ENCODE measurements at regions of chr1 and their contacts with region 1.

Region 1: GRCh38 chr1:151399890-151400495 is 620 bp downstream of the PSMB4 start:
- DNase-seq: peak in 4 of 14 experiments; percentile 15 to 49 (median 39)
- ATAC-seq: peak; percentile 1
- H3K4me3 ChIP-seq: peak overlapping the region; percentile 99
- H3K4me3 Mint-ChIP-seq: peak overlapping the region; percentile 93
- H3K27ac ChIP-seq: peak overlapping the region; percentile 91 to 97
- H3K27ac Mint-ChIP-seq: peak overlapping the region; percentile 93
- H3K4me1 ChIP-seq: peaks cover 29% of the 10 kb centered on the region
- H3K4me1 Mint-ChIP-seq: peaks cover 27% of the 10 kb centered on the region
- H3K27me3 ChIP-seq: no peaks in the 10 kb centered on the region
- H3K27me3 Mint-ChIP-seq: no peaks in the 10 kb centered on the region
- CTCF ChIP-seq: no peak

Region 2: GRCh38 chr1:151165738-151166505 is 234.1 kb before region 1 on chr1 and contains the starts of genes LYSMD1 and SCNM1:
- CTCF ChIA-PET with region 1: no interaction called
- POLR2A ChIA-PET with region 1: interaction called, 3 read pairs
- intact Hi-C with region 1: loop called in 1 of 2 experiments (anchors 2 kb)
- DNase-seq: peak; percentile 91 to 99 (median 94)
- ATAC-seq: peak; percentile 97
- H3K4me3 ChIP-seq: peak within 1 kb of the TSS; percentile 76
- H3K4me3 Mint-ChIP-seq: peak within 1 kb of the TSS; percentile 93
- H3K27ac ChIP-seq: peak within 1 kb of the TSS; percentile 36 to 42
- H3K27ac Mint-ChIP-seq: peak within 1 kb of the TSS; percentile 89
- H3K4me1 ChIP-seq: peaks cover 33% of the 10 kb centered on the region
- H3K4me1 Mint-ChIP-seq: peaks cover 52% of the 10 kb centered on the region
- H3K27me3 ChIP-seq: no peaks in the 10 kb centered on the region
- H3K27me3 Mint-ChIP-seq: no peaks in the 10 kb centered on the region
- CTCF ChIP-seq: no peak
- total RNA-seq, gene LYSMD1: 0.55 to 0.67 TPM
- total RNA-seq, gene SCNM1: 35.2 to 35.7 TPM

Region 3: DNA sequence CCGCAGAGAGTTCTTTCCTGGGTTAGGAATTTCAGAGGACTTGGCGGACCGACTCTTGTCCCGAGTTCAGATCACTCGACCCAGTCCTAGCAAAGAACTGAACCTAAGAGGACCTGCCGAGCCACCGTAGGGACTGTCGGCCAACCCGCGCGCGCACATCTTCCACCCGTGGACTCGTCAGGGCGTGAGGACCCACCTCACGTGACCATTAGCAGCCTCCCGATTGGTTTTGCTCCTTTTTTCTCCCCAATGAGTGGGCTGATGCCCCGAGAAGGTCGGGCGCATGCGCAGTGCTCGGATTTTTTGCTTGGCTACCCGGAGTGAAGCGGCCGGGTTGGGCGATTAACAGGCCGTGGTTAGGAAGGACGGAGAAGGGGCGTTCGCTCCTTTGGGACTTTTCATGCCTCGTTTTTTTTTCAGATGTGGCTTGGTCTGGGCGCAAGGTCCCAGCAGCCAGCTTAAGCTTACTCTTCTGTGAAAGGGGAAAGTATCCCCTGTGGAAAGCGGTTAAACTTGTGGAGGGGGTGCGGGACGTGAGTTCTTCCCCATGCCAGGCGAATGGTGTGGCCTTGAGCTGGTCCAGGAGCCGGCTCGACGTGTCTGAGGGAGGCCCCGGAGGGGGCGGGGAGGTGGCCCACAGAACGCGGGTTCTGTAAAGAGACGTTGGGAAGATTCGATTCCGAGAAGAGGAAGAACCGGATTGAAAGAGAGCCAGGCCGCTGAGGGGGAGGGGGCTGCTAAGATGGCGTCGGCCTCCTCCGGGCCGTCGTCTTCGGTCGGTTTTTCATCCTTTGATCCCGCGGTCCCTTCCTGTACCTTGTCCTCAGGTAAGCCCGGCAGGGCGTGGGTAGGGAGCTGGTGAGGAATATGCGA is 201.5 kb before region 1 on chr1 and contains the start of gene PIP5K1A:
- CTCF ChIA-PET with region 1: no interaction called
- POLR2A ChIA-PET with region 1: no interaction called
- intact Hi-C with region 1: loop called in 1 of 2 experiments (anchors 2 kb)
- DNase-seq: peak; percentile 96 to 99 (median 99)
- ATAC-seq: peak; percentile 95
- H3K4me3 ChIP-seq: peak within 1 kb of the TSS; percentile 93
- H3K4me3 Mint-ChIP-seq: peak within 1 kb of the TSS; percentile 98
- H3K27ac ChIP-seq: peak within 1 kb of the TSS; percentile 69 to 77
- H3K27ac Mint-ChIP-seq: peak within 1 kb of the TSS; percentile 96
- H3K4me1 ChIP-seq: peaks cover 43% of the 10 kb centered on the region
- H3K4me1 Mint-ChIP-seq: peaks cover 48% of the 10 kb centered on the region
- H3K27me3 ChIP-seq: no peaks in the 10 kb centered on the region
- H3K27me3 Mint-ChIP-seq: peaks cover 4% of the 10 kb centered on the region
- CTCF ChIP-seq: no peak
- total RNA-seq, gene PIP5K1A: 41.7 to 44.7 TPM

Region 4: DNA sequence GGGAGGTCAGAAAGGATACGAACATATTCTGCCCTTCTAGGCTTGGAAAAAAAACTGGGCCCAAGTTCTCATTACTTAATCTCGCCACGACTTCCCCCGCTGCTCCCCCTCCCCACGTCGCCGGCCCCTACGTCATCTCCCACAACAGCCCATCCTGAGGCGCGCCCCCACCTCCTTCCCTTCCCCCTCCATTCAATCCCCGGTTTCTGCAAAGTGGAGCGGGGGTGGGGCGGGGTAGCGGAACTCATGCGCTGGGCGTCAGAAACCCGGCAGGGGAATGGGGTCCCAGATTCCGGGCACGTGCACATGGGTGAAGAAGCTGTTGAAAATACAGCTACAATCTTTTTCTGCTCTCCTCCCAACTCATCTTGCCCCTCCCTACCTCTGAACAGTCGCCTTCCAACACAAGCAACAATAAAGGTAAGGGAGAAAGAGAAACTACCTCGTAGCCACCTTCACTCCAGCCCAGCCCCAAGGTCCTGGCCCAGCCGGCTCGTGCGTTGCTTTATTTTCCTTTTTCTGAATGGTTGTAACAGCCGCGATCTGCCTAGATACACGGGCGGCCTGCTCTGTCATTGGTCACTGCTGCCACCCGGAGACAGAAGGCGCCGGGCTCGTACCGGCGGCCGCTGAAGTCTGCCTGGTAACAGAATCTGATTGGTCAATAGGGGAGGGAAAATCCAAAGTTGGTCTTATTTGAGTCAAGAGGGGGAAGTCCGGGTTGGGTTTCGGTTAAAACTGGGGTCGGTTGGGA is 53.0 kb before region 1 on chr1 and contains the start of gene RFX5:
- CTCF ChIA-PET with region 1: interaction called, 6 read pairs
- POLR2A ChIA-PET with region 1: interaction called, 13 read pairs
- intact Hi-C with region 1: loop called (anchors 2 to 5 kb)
- DNase-seq: peak; percentile 85 to 99 (median 90)
- ATAC-seq: peak; percentile 93
- H3K4me3 ChIP-seq: peak within 1 kb of the TSS; percentile 81
- H3K4me3 Mint-ChIP-seq: peak within 1 kb of the TSS; percentile 94
- H3K27ac ChIP-seq: peak within 1 kb of the TSS; percentile 97 to 98
- H3K27ac Mint-ChIP-seq: peak within 1 kb of the TSS; percentile 94
- H3K4me1 ChIP-seq: peaks cover 33% of the 10 kb centered on the region
- H3K4me1 Mint-ChIP-seq: peaks cover 30% of the 10 kb centered on the region
- H3K27me3 ChIP-seq: no peaks in the 10 kb centered on the region
- H3K27me3 Mint-ChIP-seq: no peaks in the 10 kb centered on the region
- CTCF ChIP-seq: no peak
- total RNA-seq, gene RFX5: 62.0 to 65.7 TPM

Region 5: DNA sequence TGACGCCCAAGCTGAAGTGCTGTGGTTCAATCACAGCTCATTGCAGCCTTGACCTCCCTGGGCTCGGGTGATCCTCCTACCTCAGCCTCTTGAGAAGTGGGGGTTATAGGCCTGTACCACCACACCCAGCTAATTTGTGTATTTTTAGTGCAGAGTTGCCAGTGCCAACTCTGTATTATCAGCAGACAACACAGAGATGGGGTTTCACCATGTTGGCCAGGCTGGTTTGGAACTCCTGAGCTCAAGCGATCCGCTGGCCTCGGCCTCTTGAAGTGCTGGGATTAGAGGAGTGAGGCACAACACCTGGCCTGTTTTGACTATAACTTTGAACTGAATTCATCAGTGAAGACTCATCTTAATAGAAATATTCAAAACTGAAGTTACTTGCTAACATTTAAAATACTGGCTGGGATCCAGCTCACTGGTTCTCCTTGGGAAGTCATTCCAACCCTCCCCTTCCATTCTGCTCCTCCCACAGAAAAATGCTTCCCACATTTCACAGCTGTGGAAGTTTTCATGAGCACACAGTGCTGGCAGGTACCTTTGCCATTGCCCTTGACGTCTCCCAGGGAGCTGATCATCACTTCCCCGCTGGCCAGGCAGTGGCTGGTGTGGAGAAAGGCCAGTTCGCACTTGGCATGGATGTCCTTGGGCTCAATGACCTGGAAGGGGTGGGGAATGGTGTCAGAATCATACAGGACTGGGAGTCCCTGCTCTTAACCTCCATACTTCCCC is 32.2 kb before region 1 on chr1:
- CTCF ChIA-PET with region 1: no interaction called
- POLR2A ChIA-PET with region 1: no interaction called
- intact Hi-C with region 1: no loop called
- DNase-seq: no peak
- ATAC-seq: no peak
- H3K4me3 ChIP-seq: no peak overlapping the region
- H3K4me3 Mint-ChIP-seq: no peak overlapping the region
- H3K27ac ChIP-seq: no peak overlapping the region
- H3K27ac Mint-ChIP-seq: no peak overlapping the region
- H3K4me1 ChIP-seq: no peaks in the 10 kb centered on the region
- H3K4me1 Mint-ChIP-seq: no peaks in the 10 kb centered on the region
- H3K27me3 ChIP-seq: no peaks in the 10 kb centered on the region
- H3K27me3 Mint-ChIP-seq: no peaks in the 10 kb centered on the region
- CTCF ChIP-seq: no peak